PC-3 (cell line): ENCODE measurements at regions of chr6 and their contacts with region 1.

Region 1: DNA sequence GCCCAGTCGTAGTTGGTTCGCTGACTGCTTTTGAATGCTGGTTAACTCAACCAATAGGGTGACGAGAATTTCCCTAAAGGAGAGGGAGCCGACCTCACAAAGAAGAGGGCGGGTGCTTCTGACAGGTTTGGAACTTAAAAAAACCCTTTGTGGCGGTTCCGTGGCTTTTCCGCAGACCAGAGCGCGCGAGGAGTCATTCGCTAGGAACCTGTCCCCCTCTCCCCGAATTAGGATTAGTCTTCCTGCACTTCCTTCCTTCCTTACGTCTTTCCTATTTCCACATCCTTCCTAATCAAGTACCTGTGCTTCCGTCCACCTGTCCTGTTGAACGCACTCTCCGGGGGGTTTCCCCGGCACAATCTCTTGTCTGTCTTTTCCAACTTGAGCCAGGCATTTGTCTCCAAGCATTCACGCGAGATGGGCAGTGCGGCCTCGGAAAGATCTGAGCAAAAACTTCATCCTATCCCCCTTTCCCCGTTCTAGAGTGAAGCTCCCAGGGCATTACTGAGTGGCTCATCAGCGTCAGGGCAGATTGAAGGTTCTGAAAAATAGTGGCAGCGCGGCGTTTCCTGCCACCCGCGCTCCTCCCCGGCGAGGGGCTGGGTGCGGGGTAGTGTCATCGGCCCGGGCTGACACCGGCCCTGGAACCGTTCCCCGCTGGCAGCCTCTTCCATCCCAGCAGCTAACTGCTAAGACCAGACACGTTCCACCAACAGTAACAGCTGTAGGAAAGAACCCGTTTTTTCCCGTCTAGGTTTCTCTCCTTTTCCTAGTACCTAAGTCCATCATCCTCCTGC is 1.5 kb upstream of the STXBP5 start:
- DNase-seq: peak; percentile 92
- ATAC-seq: peak; percentile 75
- H3K4me3 ChIP-seq: peak overlapping the region; percentile 85
- H3K27ac ChIP-seq: peak overlapping the region; percentile 54
- H3K4me1 ChIP-seq: peaks cover 13% of the 10 kb centered on the region
- H3K27me3 ChIP-seq: no peaks in the 10 kb centered on the region
- CTCF ChIP-seq: no peak

Region 2: GRCh38 chr6:146913842-146914488 is 288.7 kb before region 1 on chr6:
- CTCF ChIA-PET with region 1: no interaction called
- POLR2A ChIA-PET with region 1: interaction called, 3 read pairs
- intact Hi-C with region 1: loop called (anchors 2 kb)
- DNase-seq: peak; percentile 93
- ATAC-seq: peak; percentile 76
- H3K4me3 ChIP-seq: peak overlapping the region; percentile 58
- H3K27ac ChIP-seq: peak overlapping the region; percentile 98
- H3K4me1 ChIP-seq: peaks cover 41% of the 10 kb centered on the region
- H3K27me3 ChIP-seq: no peaks in the 10 kb centered on the region
- CTCF ChIP-seq: no peak

Region 3: DNA sequence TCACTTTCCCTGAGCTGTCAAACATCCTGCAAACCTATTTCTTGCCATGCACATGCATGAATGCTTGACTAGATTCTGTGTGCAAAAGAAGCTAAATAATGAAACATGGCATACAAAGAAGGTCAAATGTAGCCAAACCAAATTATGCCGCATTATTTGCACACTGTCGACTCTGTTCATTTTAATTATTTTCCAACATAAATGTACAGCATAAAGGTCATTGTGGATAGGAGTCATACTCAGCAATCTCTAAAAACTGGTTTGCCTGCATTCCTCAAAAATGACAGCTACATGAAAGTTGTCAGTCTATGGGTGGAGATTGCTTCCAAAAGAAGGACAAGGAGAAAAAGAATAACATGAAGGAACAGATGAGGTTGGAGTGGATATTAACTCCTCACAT is 121.6 kb before region 1 on chr6:
- CTCF ChIA-PET with region 1: no interaction called
- POLR2A ChIA-PET with region 1: no interaction called
- intact Hi-C with region 1: loop called (anchors 2 kb)
- DNase-seq: peak; percentile 96
- ATAC-seq: peak; percentile 70
- H3K4me3 ChIP-seq: peak overlapping the region; percentile 34; the same call in 1 of the 2 replicates
- H3K27ac ChIP-seq: peak overlapping the region; percentile 68
- H3K4me1 ChIP-seq: peaks cover 31% of the 10 kb centered on the region
- H3K27me3 ChIP-seq: no peaks in the 10 kb centered on the region
- CTCF ChIP-seq: no peak

Region 4: DNA sequence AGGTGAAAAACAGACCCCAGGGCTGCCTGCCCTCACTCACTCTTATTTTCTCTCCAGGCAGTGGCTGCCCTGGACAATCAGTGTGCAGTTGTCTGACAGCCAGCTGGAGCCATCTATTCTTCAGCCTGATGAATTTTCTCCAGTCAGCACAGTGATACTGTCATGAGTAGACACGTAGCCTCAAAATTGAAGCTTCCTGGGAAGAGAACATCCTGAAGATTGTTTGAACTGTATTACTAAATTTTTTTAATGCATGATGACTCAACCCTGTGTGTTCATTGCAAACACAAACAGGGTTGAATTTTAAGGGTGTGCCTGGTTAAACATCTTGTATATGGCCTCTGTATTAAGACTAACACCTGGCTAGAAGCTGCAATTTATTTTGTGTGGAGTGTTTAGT is 48.3 kb before region 1 on chr6:
- CTCF ChIA-PET with region 1: no interaction called
- POLR2A ChIA-PET with region 1: no interaction called
- intact Hi-C with region 1: loop called (anchors 2 kb)
- DNase-seq: peak; percentile 94
- ATAC-seq: peak; percentile 97
- H3K4me3 ChIP-seq: peak overlapping the region; percentile 27; the same call in 1 of the 2 replicates
- H3K27ac ChIP-seq: peak overlapping the region; percentile 91
- H3K4me1 ChIP-seq: peaks cover 28% of the 10 kb centered on the region
- H3K27me3 ChIP-seq: no peaks in the 10 kb centered on the region
- CTCF ChIP-seq: no peak

Region 5: DNA sequence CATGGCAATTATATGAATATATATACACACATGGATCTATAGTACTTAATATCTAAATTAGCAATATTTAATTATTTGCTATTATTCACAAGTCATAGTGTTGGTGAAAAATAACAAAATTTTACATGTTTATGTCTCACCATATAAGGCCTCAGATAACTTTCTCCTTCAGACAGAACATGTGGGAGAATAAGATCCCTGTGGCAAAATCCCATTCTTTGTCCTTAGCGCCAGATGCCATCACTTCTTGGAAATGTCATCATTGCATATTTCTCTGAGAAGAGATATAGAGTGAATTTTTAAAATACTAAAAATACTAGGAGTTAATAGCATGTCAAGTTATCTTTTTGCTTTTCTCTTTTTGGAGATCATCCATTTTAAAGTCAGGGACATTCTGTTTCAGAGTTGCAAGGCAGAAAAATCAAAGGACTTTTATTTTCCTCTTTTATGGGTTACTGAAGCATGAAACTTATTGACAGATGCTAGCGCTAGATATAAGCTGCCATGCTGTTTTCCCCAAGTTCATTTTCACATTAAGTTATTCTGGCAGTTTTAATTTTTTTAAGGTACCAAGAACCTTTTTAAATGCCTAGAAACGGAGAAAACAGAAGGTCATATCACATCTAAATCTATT is 28.9 kb before region 1 on chr6:
- CTCF ChIA-PET with region 1: no interaction called
- POLR2A ChIA-PET with region 1: no interaction called
- intact Hi-C with region 1: loop called (anchors 2 kb)
- DNase-seq: no peak
- ATAC-seq: no peak
- H3K4me3 ChIP-seq: no peak overlapping the region
- H3K27ac ChIP-seq: peak overlapping the region; percentile 27
- H3K4me1 ChIP-seq: peaks cover 23% of the 10 kb centered on the region
- H3K27me3 ChIP-seq: no peaks in the 10 kb centered on the region
- CTCF ChIP-seq: no peak

Region 6: GRCh38 chr6:147285087-147285855 is 82.6 kb after region 1 on chr6:
- CTCF ChIA-PET with region 1: no interaction called
- POLR2A ChIA-PET with region 1: no interaction called
- intact Hi-C with region 1: loop called (anchors 10 kb)
- DNase-seq: peak; percentile 68
- ATAC-seq: peak; percentile 41
- H3K4me3 ChIP-seq: no peak overlapping the region
- H3K27ac ChIP-seq: no peak overlapping the region
- H3K4me1 ChIP-seq: peaks cover 37% of the 10 kb centered on the region
- H3K27me3 ChIP-seq: no peaks in the 10 kb centered on the region
- CTCF ChIP-seq: peak; percentile 68

Region 7: GRCh38 chr6:147341486-147341885 is 138.8 kb after region 1 on chr6:
- CTCF ChIA-PET with region 1: no interaction called
- POLR2A ChIA-PET with region 1: no interaction called
- intact Hi-C with region 1: no loop called
- DNase-seq: no peak
- ATAC-seq: no peak
- H3K4me3 ChIP-seq: no peak overlapping the region
- H3K27ac ChIP-seq: no peak overlapping the region
- H3K4me1 ChIP-seq: no peaks in the 10 kb centered on the region
- H3K27me3 ChIP-seq: no peaks in the 10 kb centered on the region
- CTCF ChIP-seq: no peak